Ovary (tissue), 10 donors: ENCODE measurements at regions of chr14 and their contacts with region 1.

Region 1: GRCh38 chr14:68824517-68825347 is 31.9 kb upstream of the ZFP36L1 start:
- DNase-seq: peak; percentile 81 to 94 (median 89)
- H3K4me3 ChIP-seq: no peak overlapping the region
- H3K27ac ChIP-seq: no peak overlapping the region
- H3K4me1 ChIP-seq: peaks cover 5% of the 10 kb centered on the region
- H3K27me3 ChIP-seq: no peaks in the 10 kb centered on the region
- CTCF ChIP-seq: peak; percentile 75 to 83 (median 79)
- EP300 ChIP-seq: no peak
- POLR2A ChIP-seq: no peak

Region 2: GRCh38 chr14:67837011-67837624 is 987.6 kb before region 1 on chr14:
- intact Hi-C with region 1: loop called in 3 of 4 experiments (anchors 10 kb)
- DNase-seq: peak; percentile 42 to 77 (median 58)
- H3K4me3 ChIP-seq: no peak overlapping the region
- H3K27ac ChIP-seq: no peak overlapping the region
- H3K4me1 ChIP-seq: no peaks in the 10 kb centered on the region
- H3K27me3 ChIP-seq: no peaks in the 10 kb centered on the region
- CTCF ChIP-seq: peak; percentile 24 to 86 (median 78)
- EP300 ChIP-seq: no peak
- POLR2A ChIP-seq: no peak

Region 3: DNA sequence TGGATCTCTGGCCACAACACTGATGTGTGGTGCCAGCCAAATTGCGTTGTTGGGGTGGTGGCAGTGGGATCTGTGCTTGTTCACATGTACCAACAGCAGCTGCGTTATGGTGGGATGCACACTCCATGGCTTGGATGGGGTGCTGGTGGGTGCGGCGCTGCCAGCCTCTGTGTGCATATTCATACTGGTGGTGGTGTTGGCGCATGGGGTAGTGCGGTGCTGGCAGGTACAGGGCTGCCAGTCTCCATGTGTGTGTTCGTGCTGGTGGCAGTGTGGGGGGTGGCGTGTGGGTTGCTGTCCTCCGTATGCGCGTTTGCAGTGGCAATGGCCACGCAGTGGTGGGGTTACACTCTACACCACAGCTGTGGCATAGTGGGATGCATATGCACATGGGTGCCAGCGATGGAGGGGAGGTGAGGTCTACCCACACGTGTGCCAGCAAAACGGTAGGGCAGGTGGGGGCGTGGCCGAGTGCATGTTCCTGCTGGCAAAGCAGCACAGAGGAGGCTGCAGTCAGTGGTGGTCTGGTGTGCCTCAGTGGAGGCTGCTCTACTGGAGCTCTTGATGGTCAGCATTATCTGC is 978.6 kb before region 1 on chr14:
- intact Hi-C with region 1: loop called in 2 of 4 experiments (anchors 10 kb)
- DNase-seq: no peak
- H3K4me3 ChIP-seq: no peak overlapping the region
- H3K27ac ChIP-seq: no peak overlapping the region
- H3K4me1 ChIP-seq: no peaks in the 10 kb centered on the region
- H3K27me3 ChIP-seq: no peaks in the 10 kb centered on the region
- CTCF ChIP-seq: no peak
- EP300 ChIP-seq: no peak
- POLR2A ChIP-seq: no peak

Region 4: GRCh38 chr14:67883717-67884116 is 941.0 kb before region 1 on chr14:
- intact Hi-C with region 1: loop called in 1 of 4 experiments (anchors 5 kb)
- DNase-seq: no peak
- H3K4me3 ChIP-seq: no peak overlapping the region
- H3K27ac ChIP-seq: peak overlapping the region in 1 of 2 donors; percentile 72
- H3K4me1 ChIP-seq: peaks cover 3% of the 10 kb centered on the region
- H3K27me3 ChIP-seq: no peaks in the 10 kb centered on the region
- CTCF ChIP-seq: peak in 2 of 3 donors; percentile 15 to 46
- EP300 ChIP-seq: no peak
- POLR2A ChIP-seq: no peak

Region 5: GRCh38 chr14:67934008-67934481 is 890.7 kb before region 1 on chr14:
- intact Hi-C with region 1: loop called (anchors 5 kb)
- DNase-seq: peak in 2 of 5 donors; percentile 26 to 53
- H3K4me3 ChIP-seq: no peak overlapping the region
- H3K27ac ChIP-seq: peak overlapping the region in 1 of 2 donors; percentile 38
- H3K4me1 ChIP-seq: peaks cover 3% of the 10 kb centered on the region
- H3K27me3 ChIP-seq: no peaks in the 10 kb centered on the region
- CTCF ChIP-seq: peak; percentile 67 to 96 (median 93)
- EP300 ChIP-seq: no peak
- POLR2A ChIP-seq: no peak